Posterior vena cava (tissue), 2 donors: ENCODE measurements at regions of chr16 and their contacts with region 1.

Region 1: DNA sequence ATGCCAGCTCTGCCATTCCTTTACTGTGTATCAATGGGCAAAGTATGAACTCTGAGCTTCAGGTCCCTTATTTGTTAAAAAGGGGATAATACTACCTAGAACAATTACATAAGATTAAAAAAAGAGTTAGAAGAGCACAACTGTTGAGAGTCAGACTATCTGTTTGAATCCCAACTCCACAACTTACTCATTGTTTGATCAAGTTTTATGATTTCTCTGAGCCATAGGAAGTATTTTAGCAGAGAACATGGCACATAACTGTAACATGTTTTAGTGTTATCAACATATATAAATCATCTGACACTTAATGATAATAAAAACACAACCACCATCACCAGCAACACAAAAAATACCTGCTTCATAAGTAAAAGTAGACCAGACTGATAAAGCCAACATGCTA is 421.3 kb downstream of the ZFHX3 start:
- DNase-seq: no peak

Region 2: GRCh38 chr16:72590151-72590937 is 36.3 kb before region 1 on chr16:
- intact Hi-C with region 1: loop called in 1 of 2 experiments (anchors 5 kb)
- DNase-seq: no peak